Naive thymus-derived CD4-positive, alpha-beta T cell (primary cell): ENCODE measurements at regions of chr3 and their contacts with region 1.

Region 1: DNA sequence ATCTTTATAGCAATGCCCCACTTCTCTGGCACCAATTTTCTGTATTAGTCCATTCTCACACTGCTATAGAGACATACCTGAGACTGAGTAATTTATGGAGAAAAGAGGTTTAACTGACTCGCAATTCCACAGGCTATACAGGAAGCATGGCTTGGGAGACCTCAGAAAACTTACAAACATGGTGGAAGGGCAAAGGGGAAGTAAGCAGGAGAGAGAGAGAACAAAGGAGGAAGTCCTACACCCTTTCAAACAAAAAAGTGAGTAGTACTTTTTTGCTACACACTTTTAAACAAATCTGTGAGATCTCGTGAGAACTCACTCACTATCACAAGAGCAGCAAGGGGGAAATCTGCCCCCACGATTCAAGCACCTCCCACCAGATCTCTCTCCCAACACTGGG is 67.8 kb upstream of the ZBED2 start:
- DNase-seq: no peak
- ATAC-seq: no peak
- H3K4me3 ChIP-seq: no peak overlapping the region
- H3K4me3 Mint-ChIP-seq: no peak overlapping the region
- H3K27ac ChIP-seq: no peak overlapping the region
- H3K27ac Mint-ChIP-seq: peak overlapping the region in 4 of 9 donors; percentile 3 to 53 (median 14)
- H3K4me1 ChIP-seq: peaks cover 15 to 17% of the 10 kb centered on the region in 2 donors
- H3K4me1 Mint-ChIP-seq: peaks cover 14 to 33% (median 30%) of the 10 kb centered on the region in 7 donors
- H3K27me3 ChIP-seq: no peaks in the 10 kb centered on the region
- H3K27me3 Mint-ChIP-seq: no peaks in the 10 kb centered on the region

Region 2: GRCh38 chr3:111650378-111651275 is 12.3 kb before region 1 on chr3:
- CTCF ChIA-PET with region 1: interaction called, 3 read pairs
- POLR2A ChIA-PET with region 1: no interaction called
- intact Hi-C with region 1: loop called (anchors 1 to 2 kb)
- DNase-seq: no peak
- ATAC-seq: no peak
- H3K4me3 ChIP-seq: no peak overlapping the region
- H3K4me3 Mint-ChIP-seq: no peak overlapping the region
- H3K27ac ChIP-seq: no peak overlapping the region
- H3K27ac Mint-ChIP-seq: peak overlapping the region in 2 of 9 donors; percentile 32 to 55
- H3K4me1 ChIP-seq: no peaks in the 10 kb centered on the region
- H3K4me1 Mint-ChIP-seq: peaks cover 0 to 16% (median 0%) of the 10 kb centered on the region in 7 donors
- H3K27me3 ChIP-seq: no peaks in the 10 kb centered on the region
- H3K27me3 Mint-ChIP-seq: no peaks in the 10 kb centered on the region